IMR-90 (cell line): ENCODE measurements at regions of chr6 and their contacts with region 1.

Region 1: DNA sequence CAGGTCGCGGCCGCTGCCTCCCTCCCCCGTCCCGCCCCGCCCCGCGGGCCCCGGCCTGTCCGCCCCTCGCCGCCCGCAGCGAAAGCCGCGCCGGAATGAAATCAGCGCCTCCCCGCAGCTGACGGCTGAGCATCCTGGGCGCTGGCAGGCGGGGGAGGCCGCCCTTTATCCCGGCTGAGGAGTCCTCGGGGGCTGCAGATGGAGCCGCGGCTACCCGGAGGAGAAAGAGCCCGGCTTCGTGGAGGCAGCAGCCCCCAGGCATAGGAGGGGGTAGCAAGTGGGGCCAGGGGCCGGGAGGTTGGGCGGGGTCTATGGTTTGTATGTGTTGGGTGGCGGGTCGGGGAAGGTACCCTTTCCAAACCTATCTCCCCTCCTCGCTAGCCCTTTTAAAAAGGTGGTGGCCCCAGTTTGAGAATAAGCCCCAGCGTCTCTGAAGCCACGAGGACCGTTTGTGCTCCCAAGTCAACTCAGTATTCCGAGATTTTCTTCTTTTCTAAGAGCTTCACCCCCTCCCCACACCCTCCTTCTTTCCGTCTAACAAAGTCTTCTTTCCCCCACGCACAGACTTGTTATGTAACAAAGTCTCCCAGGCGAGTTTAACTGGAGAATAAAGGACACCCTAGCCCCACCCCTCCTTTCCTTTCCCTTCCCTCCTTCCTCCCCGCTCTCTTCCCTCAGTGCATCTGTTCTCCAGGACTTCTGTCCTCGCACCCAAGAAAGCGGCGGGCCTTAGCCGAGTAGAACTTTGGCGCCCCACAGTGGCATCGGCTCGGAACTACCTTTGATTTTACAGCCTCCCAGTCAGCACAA is 11.0 kb downstream of the POU3F2 start:
- DNase-seq: peak; percentile 78
- ATAC-seq: peak; percentile 92
- H3K4me3 ChIP-seq: no peak overlapping the region
- H3K27ac ChIP-seq: no peak overlapping the region
- H3K4me1 ChIP-seq: peaks cover 6% of the 10 kb centered on the region; the same call in 1 of the 2 replicates
- H3K27me3 ChIP-seq: peaks cover 82% of the 10 kb centered on the region
- CTCF ChIP-seq: peak; percentile 94
- POLR2A ChIP-seq: no peak; the same call in 1 of the 2 replicates
- RAD21 ChIP-seq: peak; percentile 93

Region 2: DNA sequence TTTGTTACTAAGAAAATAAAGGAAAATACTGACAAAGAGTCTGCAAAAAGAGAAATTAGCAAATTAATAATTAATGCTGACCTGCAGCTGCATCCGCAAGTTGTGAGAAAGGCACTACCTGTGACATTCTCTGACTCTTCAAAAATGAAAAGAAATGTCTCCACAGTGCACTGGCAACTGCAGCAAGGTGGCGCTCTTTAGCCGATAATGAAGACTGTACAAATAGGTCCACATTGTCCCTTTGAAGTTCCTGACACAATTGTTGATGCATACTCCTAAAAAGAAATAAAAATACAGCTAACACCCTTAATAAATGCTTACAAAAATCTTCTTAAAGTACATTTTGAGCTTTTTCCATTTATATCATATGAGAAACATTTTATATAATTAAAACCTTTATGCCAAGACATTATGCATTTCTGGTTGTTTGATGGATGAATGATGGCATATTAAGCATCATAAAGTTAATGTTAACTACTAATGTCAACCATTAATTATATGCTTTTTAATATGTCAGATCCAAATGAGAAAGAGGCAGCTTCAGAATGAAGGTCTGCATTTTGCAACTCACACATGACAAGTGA is 1658.9 kb before region 1 on chr6:
- CTCF ChIA-PET with region 1: no interaction called
- POLR2A ChIA-PET with region 1: no interaction called
- dilution Hi-C with region 1: no loop called
- in situ Hi-C with region 1: no loop called
- intact Hi-C with region 1: loop called (anchors 1 kb)
- DNase-seq: peak; percentile 65
- ATAC-seq: peak; percentile 74
- H3K4me3 ChIP-seq: no peak overlapping the region
- H3K27ac ChIP-seq: no peak overlapping the region
- H3K4me1 ChIP-seq: peaks cover 2% of the 10 kb centered on the region; the same call in 1 of the 2 replicates
- H3K27me3 ChIP-seq: no peaks in the 10 kb centered on the region
- CTCF ChIP-seq: peak; percentile 94
- POLR2A ChIP-seq: no peak
- RAD21 ChIP-seq: peak; percentile 87

Region 3: DNA sequence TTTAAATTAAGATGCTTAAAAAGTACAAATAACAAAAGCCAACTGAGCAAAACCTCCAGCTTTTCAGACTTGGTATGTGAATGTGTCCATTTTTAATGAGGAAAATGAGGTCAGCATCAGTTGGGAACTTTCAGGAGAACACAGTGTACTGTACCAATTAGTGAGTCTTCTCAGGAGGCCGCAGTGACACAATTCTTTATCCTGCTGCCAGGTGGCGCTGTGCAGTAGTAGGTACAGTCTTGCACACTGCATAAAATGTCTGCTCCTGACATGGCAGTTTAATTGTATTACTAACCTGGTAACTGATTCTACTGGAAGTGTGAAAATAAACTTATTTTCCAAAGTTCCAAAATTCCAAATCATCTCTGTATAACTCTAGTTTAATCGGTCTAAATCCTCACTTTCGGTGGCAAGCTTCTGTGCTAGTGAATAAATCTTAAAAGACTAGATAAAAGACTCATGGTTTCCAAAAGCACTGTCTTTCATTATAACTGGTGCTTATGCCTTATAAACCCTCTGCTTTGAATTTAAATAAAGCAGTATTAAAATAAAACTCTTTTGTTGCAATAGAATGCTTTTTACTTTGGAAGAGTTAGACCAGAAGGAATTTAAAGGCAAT is 1347.6 kb before region 1 on chr6:
- CTCF ChIA-PET with region 1: interaction called, 4 read pairs
- POLR2A ChIA-PET with region 1: no interaction called
- dilution Hi-C with region 1: no loop called
- in situ Hi-C with region 1: loop called (anchors 10 kb)
- intact Hi-C with region 1: loop called (anchors 1 kb)
- DNase-seq: peak; percentile 65
- ATAC-seq: peak; percentile 98
- H3K4me3 ChIP-seq: no peak overlapping the region
- H3K27ac ChIP-seq: no peak overlapping the region
- H3K4me1 ChIP-seq: no peaks in the 10 kb centered on the region
- H3K27me3 ChIP-seq: 0 out of 2 replicates have a peak, but pooled peaks cover 2% of the 10 kb centered on the region
- CTCF ChIP-seq: peak; percentile 83
- POLR2A ChIP-seq: no peak
- RAD21 ChIP-seq: peak; percentile 71

Region 4: GRCh38 chr6:97705568-97705967 is 1139.8 kb before region 1 on chr6:
- CTCF ChIA-PET with region 1: no interaction called
- POLR2A ChIA-PET with region 1: no interaction called
- dilution Hi-C with region 1: no loop called
- in situ Hi-C with region 1: no loop called
- intact Hi-C with region 1: loop called (anchors 2 kb)
- DNase-seq: peak; percentile 2
- ATAC-seq: no peak
- H3K4me3 ChIP-seq: no peak overlapping the region
- H3K27ac ChIP-seq: no peak overlapping the region
- H3K4me1 ChIP-seq: no peaks in the 10 kb centered on the region
- H3K27me3 ChIP-seq: no peaks in the 10 kb centered on the region
- CTCF ChIP-seq: peak; percentile 31; the same call in 1 of the 2 replicates
- POLR2A ChIP-seq: no peak
- RAD21 ChIP-seq: peak; percentile 37; the same call in 1 of the 2 replicates

Region 5: DNA sequence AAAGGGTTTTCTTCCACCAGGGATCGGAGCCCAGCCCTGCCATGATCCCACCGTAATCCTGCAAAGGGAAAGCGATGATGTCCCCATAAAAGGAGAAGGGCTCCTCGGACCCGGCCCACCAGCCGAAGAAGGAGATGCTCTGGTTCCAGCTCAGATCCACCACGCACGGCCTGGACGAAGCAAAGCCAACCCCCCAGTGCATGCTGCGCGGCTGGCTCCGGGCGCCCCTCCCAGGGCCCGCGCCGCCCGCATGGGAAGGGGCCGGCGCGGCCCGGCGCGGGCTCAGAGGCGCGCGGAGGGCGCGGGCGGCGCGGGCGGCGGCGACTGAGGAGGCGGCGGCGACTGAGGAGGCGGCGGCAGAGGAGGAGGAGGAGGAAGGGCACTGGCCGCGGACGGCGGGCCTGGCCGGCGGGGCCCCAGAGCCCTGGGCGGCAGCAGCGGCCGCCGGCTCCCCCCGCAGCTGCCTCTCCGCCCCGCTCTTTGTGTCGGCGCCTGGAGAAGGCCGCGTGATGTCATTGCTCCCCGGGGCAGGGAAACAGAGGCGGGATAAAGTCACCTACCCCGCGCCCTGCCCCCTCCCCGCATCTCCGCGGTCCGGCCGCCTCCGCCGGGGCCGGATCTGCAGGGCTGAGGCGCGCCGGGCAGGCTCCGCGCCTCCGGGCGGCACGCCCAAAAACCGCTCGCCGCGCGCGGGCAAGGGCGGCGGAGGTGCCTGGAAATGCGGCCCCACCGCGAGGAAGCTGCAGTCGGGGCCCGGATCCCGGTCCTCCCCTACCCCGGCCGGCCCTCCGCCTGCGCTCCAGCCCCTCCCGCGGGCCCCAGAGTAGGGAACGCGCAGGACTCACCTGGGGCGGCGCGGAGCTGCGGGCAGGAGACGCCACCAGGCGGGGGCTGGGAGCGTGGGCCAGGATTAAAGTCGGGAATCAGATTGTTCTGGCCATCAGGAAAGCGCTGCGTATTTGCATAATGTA is 504.0 kb after region 1 on chr6 and contains the start of gene FAXC:
- CTCF ChIA-PET with region 1: no interaction called
- POLR2A ChIA-PET with region 1: no interaction called
- dilution Hi-C with region 1: no loop called
- in situ Hi-C with region 1: no loop called
- intact Hi-C with region 1: no loop called
- DNase-seq: peak; percentile 14
- ATAC-seq: peak; percentile 77
- H3K4me3 ChIP-seq: peak within 1 kb of the TSS; percentile 51
- H3K27ac ChIP-seq: no peak within 1 kb of the TSS; the same call in 1 of the 2 replicates
- H3K4me1 ChIP-seq: no peaks in the 10 kb centered on the region
- H3K27me3 ChIP-seq: peaks cover 7% of the 10 kb centered on the region; the same call in 1 of the 2 replicates
- CTCF ChIP-seq: 0 out of 2 replicates have a peak, but pooled peaks have one; percentile 8
- POLR2A ChIP-seq: no peak
- RAD21 ChIP-seq: no peak
- total RNA-seq, gene FAXC: 1.1 and 1.9 TPM in 2 replicates